ENCODE measurements at regions of chr15 and their contacts with region 1.

Region 1: GRCh38 chr15:101152914-101153313 is 98.9 kb downstream of the CHSY1 start:
- DNase-seq: no peak
- H3K4me3 ChIP-seq: no peak overlapping the region
- H3K27ac ChIP-seq: no peak overlapping the region
- H3K4me1 ChIP-seq: peaks cover 4% of the 10 kb centered on the region
- H3K27me3 ChIP-seq: no peaks in the 10 kb centered on the region
- CTCF ChIP-seq: peak; percentile 45 to 57
- POLR2A ChIP-seq: no peak

Region 2: GRCh38 chr15:101127506-101128076 is 25.3 kb before region 1 on chr15:
- CTCF ChIA-PET with region 1: interaction called, 5 read pairs
- POLR2A ChIA-PET with region 1: no interaction called
- dilution Hi-C with region 1: no loop called
- intact Hi-C with region 1: loop called (anchors 2 kb)
- DNase-seq: peak; percentile 94
- H3K4me3 ChIP-seq: no peak overlapping the region
- H3K27ac ChIP-seq: peak overlapping the region; percentile 63
- H3K4me1 ChIP-seq: peaks cover 20% of the 10 kb centered on the region
- H3K27me3 ChIP-seq: no peaks in the 10 kb centered on the region
- CTCF ChIP-seq: no peak
- POLR2A ChIP-seq: no peak

Measured in endothelial cell of umbilical vein (primary cell).